Gastrocnemius medialis (tissue), 4 donors: ENCODE measurements at regions of chr6 and their contacts with region 1.

Region 1: GRCh38 chr6:15264902-15265761 is 19.3 kb downstream of the JARID2 start:
- DNase-seq: peak; percentile 58 to 63
- ATAC-seq: peak; percentile 48 to 51
- H3K4me3 ChIP-seq: peak overlapping the region in 3 of 4 donors; percentile 0 to 39 (median 10)
- H3K27ac ChIP-seq: peak overlapping the region; percentile 82 to 88 (median 84)
- H3K4me1 ChIP-seq: peaks cover 78 to 87% of the 10 kb centered on the region in 2 donors
- H3K27me3 ChIP-seq: no peaks in the 10 kb centered on the region
- CTCF ChIP-seq: no peak
- POLR2A ChIP-seq: no peak

Region 2: DNA sequence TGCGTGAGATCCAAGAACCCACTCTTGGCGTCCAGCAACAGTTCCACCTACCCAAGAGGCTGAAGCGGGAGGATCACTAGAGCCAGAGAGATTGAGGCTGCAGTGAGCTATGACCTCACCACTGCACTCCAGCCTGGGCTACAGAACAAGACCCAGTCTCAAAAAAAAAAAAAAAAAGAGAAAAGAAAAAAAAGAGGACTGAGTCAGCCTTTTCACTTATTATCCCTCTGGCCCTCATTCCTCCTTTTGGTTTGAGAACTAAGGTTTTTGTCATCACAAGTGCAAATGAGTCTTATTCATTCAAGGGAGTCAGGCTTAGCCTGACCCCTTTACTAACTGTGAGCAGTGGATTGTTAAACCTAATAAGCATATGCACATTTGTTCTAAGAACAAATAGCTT is 57.2 kb before region 1 on chr6:
- in situ Hi-C with region 1: no loop called
- intact Hi-C with region 1: no loop called
- DNase-seq: no peak
- ATAC-seq: no peak
- H3K4me3 ChIP-seq: no peak overlapping the region
- H3K27ac ChIP-seq: no peak overlapping the region
- H3K4me1 ChIP-seq: no peaks in the 10 kb centered on the region
- H3K27me3 ChIP-seq: no peaks in the 10 kb centered on the region
- CTCF ChIP-seq: no peak
- POLR2A ChIP-seq: no peak

Region 3: DNA sequence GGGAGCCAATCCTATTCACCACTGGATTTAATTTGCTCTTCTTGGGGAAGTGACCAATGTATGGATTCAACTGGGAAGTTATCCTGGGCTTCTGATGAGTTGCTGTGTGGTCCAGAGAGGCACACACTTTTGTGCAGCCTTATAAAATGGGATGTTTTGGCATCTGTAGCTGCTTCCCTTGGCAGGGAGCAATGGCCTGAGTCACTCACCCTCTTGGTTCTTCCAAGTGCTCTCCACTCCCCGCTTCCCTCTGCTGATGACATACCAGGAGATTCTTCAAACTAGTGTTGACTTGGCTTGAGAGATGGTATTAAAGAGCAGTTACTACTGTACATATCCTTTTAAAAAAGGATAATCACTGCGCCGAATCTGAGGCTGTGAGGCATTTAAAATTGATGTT is 86.5 kb after region 1 on chr6:
- in situ Hi-C with region 1: loop called in 1 of 4 experiments (anchors 25 kb)
- intact Hi-C with region 1: loop called (anchors 5 kb)
- DNase-seq: peak; percentile 62 to 83
- ATAC-seq: peak; percentile 90 to 93
- H3K4me3 ChIP-seq: no peak overlapping the region
- H3K27ac ChIP-seq: peak overlapping the region; percentile 62 to 76 (median 71)
- H3K4me1 ChIP-seq: peaks cover 49 to 61% of the 10 kb centered on the region in 2 donors
- H3K27me3 ChIP-seq: no peaks in the 10 kb centered on the region
- CTCF ChIP-seq: no peak
- POLR2A ChIP-seq: no peak